ENCODE measurements at regions of chr1 and their contacts with region 1.

Region 1: DNA sequence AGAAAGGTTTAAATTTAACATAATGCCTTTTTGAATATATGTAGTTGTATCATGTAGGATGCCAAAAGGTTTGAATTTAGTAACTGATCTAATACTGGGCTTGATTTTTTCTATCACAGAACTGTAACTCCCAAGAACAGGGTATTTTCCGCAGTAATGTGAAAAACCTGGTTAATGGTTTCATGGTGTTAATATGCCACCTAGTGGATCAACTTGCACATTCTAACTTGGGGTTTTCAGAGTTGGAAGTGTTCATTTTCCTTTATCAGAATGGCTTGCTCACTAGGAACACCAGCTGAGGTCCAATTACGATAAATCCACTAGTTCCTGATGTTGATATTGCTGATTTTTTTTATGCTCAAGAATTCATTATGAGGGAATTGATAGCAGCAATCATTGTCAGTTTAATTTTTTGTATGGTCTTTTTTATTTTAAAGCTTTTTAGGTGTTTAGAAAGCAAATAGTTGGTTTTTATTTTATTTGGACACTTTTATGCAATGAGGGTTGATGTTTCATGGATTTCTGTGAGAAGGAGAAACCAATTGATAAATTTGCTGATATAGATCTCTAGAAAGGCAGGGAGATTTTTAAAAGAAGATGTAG is 157.2 kb downstream of the PLA2G4A start:
- DNase-seq: no peak
- ATAC-seq: peak; percentile 79 to 85
- H3K4me3 ChIP-seq: no peak overlapping the region
- H3K27ac ChIP-seq: no peak overlapping the region
- H3K4me1 ChIP-seq: no peaks in the 10 kb centered on the region
- H3K27me3 ChIP-seq: no peaks in the 10 kb centered on the region

Region 2: DNA sequence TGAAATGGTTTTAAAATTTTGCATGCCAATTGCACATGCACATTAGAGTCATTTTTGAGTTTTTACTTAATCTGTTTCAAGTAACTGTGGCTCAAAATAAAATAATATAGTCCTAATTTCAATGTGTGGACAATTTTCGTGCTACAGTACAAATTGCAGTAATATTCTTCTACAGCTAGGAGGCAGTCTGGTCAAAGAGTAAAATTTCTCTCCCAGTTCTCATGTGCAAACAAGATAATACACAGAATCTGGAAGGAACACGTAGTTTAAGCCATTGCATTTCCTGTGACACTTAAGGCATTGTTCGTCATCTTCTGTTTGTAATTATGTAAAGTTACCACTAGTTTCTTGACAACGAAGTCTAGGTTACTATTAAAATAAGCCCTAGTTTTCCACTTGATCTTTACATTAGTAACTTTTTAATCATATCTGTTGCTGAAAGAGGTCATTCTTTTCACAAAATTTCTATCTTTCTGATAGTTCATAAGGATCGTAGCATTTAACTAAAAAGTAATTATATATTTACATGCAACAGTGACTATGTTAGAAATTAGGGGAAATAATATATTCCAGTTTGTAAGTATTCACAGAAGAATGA is 581.4 kb before region 1 on chr1:
- intact Hi-C with region 1: loop called in 3 of 4 experiments (anchors 10 kb)
- DNase-seq: no peak
- ATAC-seq: peak; percentile 51 to 64
- H3K4me3 ChIP-seq: no peak overlapping the region
- H3K27ac ChIP-seq: no peak overlapping the region
- H3K4me1 ChIP-seq: no peaks in the 10 kb centered on the region
- H3K27me3 ChIP-seq: no peaks in the 10 kb centered on the region

Region 3: DNA sequence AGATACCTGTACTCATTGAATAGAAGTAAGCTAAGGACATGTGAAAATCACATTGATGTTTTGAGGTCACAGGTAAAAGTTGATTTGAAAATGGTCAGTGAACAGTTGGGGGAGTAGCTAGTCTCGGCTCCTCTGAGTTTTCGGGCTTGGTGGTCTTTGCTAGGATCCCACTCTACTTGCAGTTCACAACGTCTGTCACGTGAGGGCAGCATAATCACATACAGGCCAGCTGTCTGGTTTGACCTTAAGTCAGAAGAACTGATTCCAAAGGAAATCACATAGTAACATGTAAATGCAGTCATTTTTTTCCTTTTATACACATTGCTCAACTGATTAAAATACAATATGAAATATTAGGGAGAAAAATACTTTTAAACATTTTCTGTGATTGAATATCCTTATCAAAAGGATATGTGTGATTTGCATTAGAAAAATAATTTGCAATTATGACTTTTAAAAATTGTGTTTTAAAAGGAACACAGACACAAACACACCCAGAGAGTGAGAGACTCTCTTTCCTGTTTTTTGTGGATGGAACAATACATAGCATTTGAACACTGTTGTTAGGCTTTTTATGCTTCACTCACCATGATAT is 503.2 kb before region 1 on chr1:
- intact Hi-C with region 1: loop called in 3 of 4 experiments (anchors 5 to 10 kb)
- DNase-seq: peak; percentile 34 to 80 (median 69)
- ATAC-seq: peak; percentile 62 to 74
- H3K4me3 ChIP-seq: no peak overlapping the region
- H3K27ac ChIP-seq: no peak overlapping the region
- H3K4me1 ChIP-seq: no peaks in the 10 kb centered on the region
- H3K27me3 ChIP-seq: no peaks in the 10 kb centered on the region

Region 4: GRCh38 chr1:186605762-186606350 is 380.1 kb before region 1 on chr1:
- intact Hi-C with region 1: loop called (anchors 5 to 10 kb)
- DNase-seq: peak in 2 of 3 donors; percentile 50 to 55
- ATAC-seq: peak; percentile 79 to 81
- H3K4me3 ChIP-seq: no peak overlapping the region
- H3K27ac ChIP-seq: no peak overlapping the region
- H3K4me1 ChIP-seq: no peaks in the 10 kb centered on the region
- H3K27me3 ChIP-seq: no peaks in the 10 kb centered on the region

Region 5: DNA sequence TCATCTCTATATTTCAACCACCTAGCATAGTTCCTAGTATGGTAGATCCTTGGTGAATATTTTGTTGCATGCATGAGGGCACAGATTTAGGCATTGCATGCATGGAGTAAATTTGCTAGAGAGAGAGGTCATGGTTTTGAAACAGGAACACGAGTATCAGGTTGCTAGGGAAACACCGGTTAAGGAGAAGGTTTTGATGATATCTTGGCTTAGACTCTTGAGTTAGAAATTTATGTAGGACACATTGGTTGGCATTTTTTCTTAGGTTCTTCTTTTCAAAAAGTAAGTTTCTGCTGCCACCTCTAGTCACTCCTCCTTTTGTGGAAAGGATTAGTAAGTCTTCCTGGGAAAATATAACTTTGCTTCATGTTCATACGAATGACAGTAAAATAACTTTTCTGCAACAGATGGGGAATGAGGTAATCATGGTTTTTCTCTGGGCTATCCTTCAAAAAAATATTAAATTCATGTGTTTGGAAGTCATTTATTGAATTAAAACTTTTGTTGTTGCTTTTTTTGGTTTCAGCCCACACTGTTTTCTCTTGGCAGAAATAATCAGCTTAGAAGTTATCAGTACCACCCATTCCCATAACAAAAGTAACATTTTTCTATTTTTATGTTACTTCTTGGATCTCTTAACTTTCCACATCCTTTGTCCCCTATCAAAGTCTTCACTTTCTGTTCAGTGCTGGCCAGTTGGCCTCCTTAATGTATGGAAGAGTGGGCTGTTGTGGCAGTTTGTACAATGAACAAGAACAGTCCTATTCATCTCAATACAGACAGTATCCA is 59.9 kb before region 1 on chr1:
- intact Hi-C with region 1: no loop called
- DNase-seq: no peak
- ATAC-seq: peak; percentile 59 to 64
- H3K4me3 ChIP-seq: no peak overlapping the region
- H3K27ac ChIP-seq: no peak overlapping the region
- H3K4me1 ChIP-seq: no peaks in the 10 kb centered on the region
- H3K27me3 ChIP-seq: no peaks in the 10 kb centered on the region

Measured in right cardiac atrium (tissue), 5 donors.